Heart left ventricle (tissue), 16 donors: ENCODE measurements at regions of chr11 and their contacts with region 1.

Region 1: DNA sequence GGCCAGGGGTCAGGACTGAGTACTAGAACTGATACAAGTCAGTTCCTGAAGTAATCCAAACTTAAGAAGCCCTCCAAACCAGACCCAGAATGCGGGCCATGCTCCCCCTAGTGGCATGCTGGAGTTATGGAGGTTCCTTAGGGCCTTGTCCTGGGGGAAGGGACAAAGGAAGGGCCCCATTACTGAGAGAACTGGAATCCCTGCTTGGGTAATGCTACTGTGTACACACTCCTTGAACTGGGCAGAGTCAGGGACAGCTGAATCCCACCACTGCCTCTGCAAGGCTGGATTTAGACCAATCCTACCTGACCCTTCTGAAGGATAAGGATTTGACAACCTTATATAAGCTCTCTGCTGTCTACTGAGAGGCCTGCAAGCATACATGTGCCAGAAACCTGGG is 97.3 kb upstream of the AKIP1 start:
- DNase-seq: peak; percentile 69 to 84 (median 74)
- ATAC-seq: peak in 3 of 4 donors; percentile 41 to 64 (median 55)
- H3K4me3 ChIP-seq: no peak overlapping the region
- H3K27ac ChIP-seq: peak overlapping the region in 8 of 12 donors; percentile 4 to 89 (median 37)
- H3K4me1 ChIP-seq: peaks cover 0 to 48% (median 26%) of the 10 kb centered on the region in 12 donors
- H3K27me3 ChIP-seq: no peaks in the 10 kb centered on the region
- CTCF ChIP-seq: peak; percentile 83 to 93 (median 85)
- POLR2A ChIP-seq: no peak

Region 2: GRCh38 chr11:8338138-8338537 is 475.5 kb before region 1 on chr11:
- intact Hi-C with region 1: loop called in 1 of 10 experiments (anchors 10 kb)
- DNase-seq: peak in 4 of 5 donors; percentile 34 to 70 (median 50)
- ATAC-seq: peak in 3 of 4 donors; percentile 50 to 77 (median 61)
- H3K4me3 ChIP-seq: no peak overlapping the region
- H3K27ac ChIP-seq: no peak overlapping the region
- H3K4me1 ChIP-seq: no peaks in the 10 kb centered on the region
- H3K27me3 ChIP-seq: no peaks in the 10 kb centered on the region
- CTCF ChIP-seq: peak; percentile 46 to 73 (median 61)
- POLR2A ChIP-seq: no peak

Region 3: DNA sequence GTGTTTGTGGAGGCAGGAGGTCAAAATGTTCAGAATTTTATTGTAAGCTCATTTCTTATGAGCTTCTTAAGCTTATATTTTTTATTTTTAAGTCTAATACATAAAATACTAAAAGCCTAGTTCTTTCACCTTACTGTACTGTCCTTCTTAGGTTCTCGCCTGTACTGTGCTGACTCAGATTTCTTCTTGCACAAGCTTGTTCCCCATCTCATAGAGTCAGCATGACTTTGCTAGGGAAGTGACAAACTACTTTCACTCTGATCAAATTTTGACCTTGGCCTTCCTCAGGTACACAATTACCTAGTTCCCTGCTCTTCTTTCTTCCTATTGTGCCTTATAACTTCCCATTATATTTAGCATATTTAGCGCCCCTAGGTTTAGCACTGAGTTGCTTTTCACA is 301.1 kb before region 1 on chr11:
- intact Hi-C with region 1: no loop called
- DNase-seq: no peak
- ATAC-seq: no peak
- H3K4me3 ChIP-seq: no peak overlapping the region
- H3K27ac ChIP-seq: no peak overlapping the region
- H3K4me1 ChIP-seq: no peaks in the 10 kb centered on the region
- H3K27me3 ChIP-seq: peaks cover 0 to 4% (median 0%) of the 10 kb centered on the region in 9 donors
- CTCF ChIP-seq: no peak
- POLR2A ChIP-seq: no peak

Region 4: GRCh38 chr11:8688414-8689362 is 125.0 kb before region 1 on chr11:
- intact Hi-C with region 1: loop called in 9 of 10 experiments (anchors 2 to 5 kb)
- DNase-seq: peak; percentile 94 to 97 (median 96)
- ATAC-seq: peak; percentile 97 to 99 (median 98)
- H3K4me3 ChIP-seq: peak overlapping the region; percentile 38 to 75 (median 66)
- H3K27ac ChIP-seq: peak overlapping the region; percentile 45 to 96 (median 88)
- H3K4me1 ChIP-seq: peaks cover 0 to 44% (median 22%) of the 10 kb centered on the region in 12 donors
- H3K27me3 ChIP-seq: no peaks in the 10 kb centered on the region
- CTCF ChIP-seq: peak in 5 of 12 donors; percentile 17 to 53 (median 49)
- POLR2A ChIP-seq: peak in 1 of 2 donors; percentile 71

Region 5: GRCh38 chr11:8717876-8718753 is 95.5 kb before region 1 on chr11:
- intact Hi-C with region 1: loop called in 3 of 10 experiments (anchors 5 to 10 kb)
- DNase-seq: peak in 4 of 5 donors; percentile 36 to 82 (median 59)
- ATAC-seq: peak; percentile 77 to 82 (median 80)
- H3K4me3 ChIP-seq: no peak overlapping the region
- H3K27ac ChIP-seq: peak overlapping the region; percentile 50 to 95 (median 80)
- H3K4me1 ChIP-seq: peaks cover 24 to 97% (median 82%) of the 10 kb centered on the region in 12 donors
- H3K27me3 ChIP-seq: no peaks in the 10 kb centered on the region
- CTCF ChIP-seq: no peak
- POLR2A ChIP-seq: no peak

Region 6: GRCh38 chr11:8870411-8871170 is 56.9 kb after region 1 on chr11:
- intact Hi-C with region 1: loop called in 1 of 10 experiments (anchors 5 kb)
- DNase-seq: peak; percentile 56 to 76 (median 69)
- ATAC-seq: peak; percentile 32 to 87 (median 74)
- H3K4me3 ChIP-seq: peak overlapping the region; percentile 43 to 97 (median 83)
- H3K27ac ChIP-seq: peak overlapping the region; percentile 43 to 94 (median 84)
- H3K4me1 ChIP-seq: peaks cover 0 to 55% (median 15%) of the 10 kb centered on the region in 12 donors
- H3K27me3 ChIP-seq: peaks cover 0 to 30% (median 0%) of the 10 kb centered on the region in 9 donors
- CTCF ChIP-seq: peak in 1 of 12 donors; percentile 23
- POLR2A ChIP-seq: no peak

Region 7: GRCh38 chr11:8964324-8965320 is 151.0 kb after region 1 on chr11 and contains the start of gene TMEM9B:
- intact Hi-C with region 1: loop called in 2 of 10 experiments (anchors 5 to 10 kb)
- DNase-seq: peak; percentile 92 to 96 (median 95)
- ATAC-seq: peak; percentile 90 to 97 (median 96)
- H3K4me3 ChIP-seq: peak within 1 kb of the TSS; percentile 61 to 97 (median 80)
- H3K27ac ChIP-seq: peak within 1 kb of the TSS; percentile 88 to 99 (median 95)
- H3K4me1 ChIP-seq: peaks cover 0 to 37% (median 25%) of the 10 kb centered on the region in 12 donors
- H3K27me3 ChIP-seq: no peaks in the 10 kb centered on the region
- CTCF ChIP-seq: no peak
- POLR2A ChIP-seq: peak in 1 of 2 donors; percentile 86
- total RNA-seq, gene TMEM9B: 39.9 to 58.3 (median 46.5) TPM